Mammary epithelial cell (primary cell): ENCODE measurements at regions of chr12 and their contacts with region 1.

Region 1: GRCh38 chr12:25583545-25583944 is 30.5 kb upstream of the LMNTD1 start:
- DNase-seq: no peak
- H3K4me3 ChIP-seq: no peak overlapping the region
- H3K27ac ChIP-seq: no peak overlapping the region
- H3K4me1 ChIP-seq: peaks cover 26% of the 10 kb centered on the region
- H3K27me3 ChIP-seq: no peaks in the 10 kb centered on the region
- CTCF ChIP-seq: peak in 1 of 2 donors; percentile 50

Region 2: DNA sequence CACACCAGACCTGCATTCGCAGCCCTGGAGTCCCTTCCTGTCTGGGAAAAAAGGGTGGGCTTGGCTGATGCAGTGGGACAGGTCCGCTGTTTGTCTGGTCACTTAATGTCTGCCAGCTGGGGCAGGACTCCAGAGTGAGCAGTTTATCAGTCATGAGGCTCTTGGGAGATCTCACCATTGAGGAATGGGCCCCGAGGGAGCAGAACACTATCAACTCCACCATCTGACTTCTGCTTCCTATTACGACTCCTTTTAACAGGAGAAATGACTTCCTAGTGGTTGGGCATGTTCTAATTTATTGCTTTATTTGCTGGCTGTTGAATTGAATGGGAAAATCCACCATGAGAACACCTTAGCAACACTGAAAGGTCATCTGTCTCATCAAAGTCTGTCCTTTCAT is 192.4 kb after region 1 on chr12:
- CTCF ChIA-PET with region 1: no interaction called
- dilution Hi-C with region 1: no loop called
- in situ Hi-C with region 1: no loop called
- intact Hi-C with region 1: loop called (anchors 10 kb)
- DNase-seq: peak; percentile 87
- H3K4me3 ChIP-seq: no peak overlapping the region
- H3K27ac ChIP-seq: no peak overlapping the region
- H3K4me1 ChIP-seq: peaks cover 7% of the 10 kb centered on the region
- H3K27me3 ChIP-seq: no peaks in the 10 kb centered on the region
- CTCF ChIP-seq: no peak

Region 3: DNA sequence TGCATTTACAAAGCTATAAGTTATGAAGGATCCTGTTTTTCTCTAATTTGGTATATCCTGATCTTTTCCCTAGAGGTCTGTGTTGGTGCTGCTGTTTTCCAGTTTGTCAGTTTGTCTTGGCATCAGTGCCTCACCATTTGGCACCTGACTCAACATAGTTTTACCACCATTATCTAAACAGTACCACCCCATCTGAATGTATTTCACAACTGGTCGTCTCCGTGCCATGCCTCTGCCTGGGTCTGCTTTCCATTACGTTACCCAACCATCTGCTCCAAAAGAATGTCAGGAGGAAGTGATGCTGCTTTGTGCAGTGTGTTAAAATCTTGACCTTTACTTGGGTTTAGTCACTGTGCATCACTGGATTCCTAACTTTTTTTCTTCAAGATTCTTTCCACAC is 245.6 kb after region 1 on chr12:
- CTCF ChIA-PET with region 1: no interaction called
- dilution Hi-C with region 1: no loop called
- in situ Hi-C with region 1: no loop called
- intact Hi-C with region 1: loop called (anchors 10 kb)
- DNase-seq: peak; percentile 82
- H3K4me3 ChIP-seq: no peak overlapping the region
- H3K27ac ChIP-seq: no peak overlapping the region
- H3K4me1 ChIP-seq: no peaks in the 10 kb centered on the region
- H3K27me3 ChIP-seq: no peaks in the 10 kb centered on the region
- CTCF ChIP-seq: no peak